ENCODE measurements at regions of chr4 and their contacts with region 1.

Region 1: GRCh38 chr4:74038161-74039064 is at the start of gene CXCL3:
- DNase-seq: peak; percentile 79 to 80
- ATAC-seq: peak; percentile 90 to 97 (median 95)
- H3K4me3 ChIP-seq: peak within 1 kb of the TSS; percentile 43 to 78 (median 68)
- H3K27ac ChIP-seq: peak within 1 kb of the TSS; percentile 27 to 94 (median 80)
- H3K4me1 ChIP-seq: peaks cover 0 to 22% (median 5%) of the 10 kb centered on the region in 9 donors
- H3K27me3 ChIP-seq: peaks cover 0 to 16% (median 0%) of the 10 kb centered on the region in 7 donors
- CTCF ChIP-seq: peak; percentile 13 to 65 (median 49)
- total RNA-seq, gene CXCL3: 0.24 to 5.1 (median 1.4) TPM in 9 of 10 donors, not detected in the other

Region 2: GRCh38 chr4:73729534-73730165 is 308.8 kb before region 1 on chr4:
- intact Hi-C with region 1: loop called in 1 of 10 experiments (anchors 10 kb)
- DNase-seq: peak; percentile 30 to 60
- ATAC-seq: peak; percentile 76 to 91 (median 87)
- H3K4me3 ChIP-seq: no peak overlapping the region
- H3K27ac ChIP-seq: peak overlapping the region in 1 of 10 donors; percentile 83
- H3K4me1 ChIP-seq: peaks cover 0 to 80% (median 32%) of the 10 kb centered on the region in 9 donors
- H3K27me3 ChIP-seq: no peaks in the 10 kb centered on the region
- CTCF ChIP-seq: peak; percentile 62 to 90 (median 83)

Region 3: DNA sequence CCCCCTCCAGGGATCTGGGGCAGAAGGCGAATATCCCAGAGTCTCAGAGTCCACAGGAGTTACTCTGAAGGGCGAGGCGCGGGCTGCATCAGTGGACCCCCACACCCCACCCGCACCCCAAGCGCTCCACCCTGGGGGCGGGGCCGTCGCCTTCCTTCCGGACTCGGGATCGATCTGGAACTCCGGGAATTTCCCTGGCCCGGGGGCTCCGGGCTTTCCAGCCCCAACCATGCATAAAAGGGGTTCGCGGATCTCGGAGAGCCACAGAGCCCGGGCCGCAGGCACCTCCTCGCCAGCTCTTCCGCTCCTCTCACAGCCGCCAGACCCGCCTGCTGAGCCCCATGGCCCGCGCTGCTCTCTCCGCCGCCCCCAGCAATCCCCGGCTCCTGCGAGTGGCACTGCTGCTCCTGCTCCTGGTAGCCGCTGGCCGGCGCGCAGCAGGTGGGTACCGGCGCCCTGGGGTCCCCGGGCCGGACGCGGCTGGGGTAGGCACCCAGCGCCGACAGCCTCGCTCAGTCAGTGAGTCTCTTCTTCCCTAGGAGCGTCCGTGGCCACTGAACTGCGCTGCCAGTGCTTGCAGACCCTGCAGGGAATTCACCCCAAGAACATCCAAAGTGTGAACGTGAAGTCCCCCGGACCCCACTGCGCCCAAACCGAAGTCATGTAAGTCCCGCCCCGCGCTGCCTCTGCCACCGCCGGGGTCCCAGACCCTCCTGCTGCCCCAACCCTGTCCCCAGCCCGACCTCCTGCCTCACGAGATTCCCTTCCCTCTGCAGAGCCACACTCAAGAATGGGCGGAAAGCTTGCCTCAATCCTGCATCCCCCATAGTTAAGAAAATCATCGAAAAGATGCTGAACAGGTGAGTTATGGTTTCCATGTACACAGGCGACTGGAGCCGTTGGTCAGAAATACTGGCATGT is 169.0 kb before region 1 on chr4 and contains the start of gene CXCL1:
- intact Hi-C with region 1: loop called in 1 of 10 experiments (anchors 5 kb)
- DNase-seq: peak; percentile 16 to 56
- ATAC-seq: peak; percentile 62 to 83 (median 73)
- H3K4me3 ChIP-seq: peak within 1 kb of the TSS; percentile 36 to 75 (median 62)
- H3K27ac ChIP-seq: peak within 1 kb of the TSS in 8 of 10 donors; percentile 28 to 91 (median 64)
- H3K4me1 ChIP-seq: peaks cover 0 to 31% (median 12%) of the 10 kb centered on the region in 9 donors
- H3K27me3 ChIP-seq: peaks cover 0 to 19% (median 5%) of the 10 kb centered on the region in 7 donors
- CTCF ChIP-seq: no peak
- total RNA-seq, gene CXCL1: 0.30 to 15.0 (median 1.3) TPM

Region 4: DNA sequence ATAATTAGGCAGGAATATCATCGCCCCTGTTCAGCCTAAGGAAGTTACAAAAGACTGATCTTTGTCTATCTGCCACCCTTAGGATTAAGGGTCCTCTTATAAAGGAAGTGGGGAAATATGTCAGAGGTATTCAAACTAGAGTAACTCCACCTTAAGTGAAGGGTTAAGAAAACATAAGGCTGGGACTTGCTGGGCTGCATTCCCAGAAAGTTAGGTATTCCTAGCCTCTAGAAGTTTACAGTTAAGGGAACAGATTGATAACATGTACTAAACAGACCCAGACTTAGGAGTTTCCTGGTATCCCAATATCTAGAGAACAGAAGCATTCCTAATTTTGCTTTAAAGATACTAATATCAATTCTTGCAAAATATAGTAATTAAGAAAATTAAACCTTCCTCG is 54.5 kb after region 1 on chr4:
- intact Hi-C with region 1: loop called in 3 of 10 experiments (anchors 5 to 10 kb)
- DNase-seq: no peak
- ATAC-seq: no peak
- H3K4me3 ChIP-seq: no peak overlapping the region
- H3K27ac ChIP-seq: peak overlapping the region in 1 of 10 donors; percentile 69
- H3K4me1 ChIP-seq: peaks cover 0 to 26% (median 4%) of the 10 kb centered on the region in 9 donors
- H3K27me3 ChIP-seq: peaks cover 0 to 3% (median 0%) of the 10 kb centered on the region in 7 donors
- CTCF ChIP-seq: no peak

Region 5: DNA sequence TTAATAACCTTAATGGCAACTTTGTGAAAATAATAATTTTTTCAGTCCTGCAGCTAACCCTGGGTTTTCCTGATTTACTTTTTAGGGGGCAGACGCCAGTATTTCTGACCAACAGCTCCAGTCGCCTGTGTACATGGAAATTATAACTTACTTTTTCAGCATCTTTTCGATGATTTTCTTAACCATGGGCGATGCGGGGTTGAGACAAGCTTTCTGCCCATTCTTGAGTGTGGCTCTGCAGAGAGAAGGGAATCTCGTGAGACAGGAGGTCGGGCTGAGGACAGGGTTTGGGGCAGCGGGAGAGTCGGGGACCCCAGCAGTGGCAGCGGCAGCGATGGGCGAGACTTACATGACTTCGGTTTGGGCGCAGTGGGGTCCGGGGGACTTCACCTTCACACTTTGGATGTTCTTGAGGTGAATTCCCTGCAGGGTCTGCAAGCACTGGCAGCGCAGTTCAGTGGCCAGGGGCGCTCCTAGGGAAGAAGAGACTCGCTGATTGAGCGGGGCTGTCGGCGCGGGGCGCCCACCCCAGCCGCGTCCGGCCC is 60.1 kb after region 1 on chr4:
- intact Hi-C with region 1: loop called in 4 of 10 experiments (anchors 5 to 10 kb)
- DNase-seq: peak in 1 of 2 donors; percentile 5
- ATAC-seq: peak in 1 of 8 donors; percentile 8
- H3K4me3 ChIP-seq: peak overlapping the region; percentile 45 to 72 (median 64)
- H3K27ac ChIP-seq: peak overlapping the region; percentile 59 to 95 (median 88)
- H3K4me1 ChIP-seq: peaks cover 0 to 35% (median 15%) of the 10 kb centered on the region in 9 donors
- H3K27me3 ChIP-seq: peaks cover 0 to 3% (median 0%) of the 10 kb centered on the region in 7 donors
- CTCF ChIP-seq: no peak

Region 6: DNA sequence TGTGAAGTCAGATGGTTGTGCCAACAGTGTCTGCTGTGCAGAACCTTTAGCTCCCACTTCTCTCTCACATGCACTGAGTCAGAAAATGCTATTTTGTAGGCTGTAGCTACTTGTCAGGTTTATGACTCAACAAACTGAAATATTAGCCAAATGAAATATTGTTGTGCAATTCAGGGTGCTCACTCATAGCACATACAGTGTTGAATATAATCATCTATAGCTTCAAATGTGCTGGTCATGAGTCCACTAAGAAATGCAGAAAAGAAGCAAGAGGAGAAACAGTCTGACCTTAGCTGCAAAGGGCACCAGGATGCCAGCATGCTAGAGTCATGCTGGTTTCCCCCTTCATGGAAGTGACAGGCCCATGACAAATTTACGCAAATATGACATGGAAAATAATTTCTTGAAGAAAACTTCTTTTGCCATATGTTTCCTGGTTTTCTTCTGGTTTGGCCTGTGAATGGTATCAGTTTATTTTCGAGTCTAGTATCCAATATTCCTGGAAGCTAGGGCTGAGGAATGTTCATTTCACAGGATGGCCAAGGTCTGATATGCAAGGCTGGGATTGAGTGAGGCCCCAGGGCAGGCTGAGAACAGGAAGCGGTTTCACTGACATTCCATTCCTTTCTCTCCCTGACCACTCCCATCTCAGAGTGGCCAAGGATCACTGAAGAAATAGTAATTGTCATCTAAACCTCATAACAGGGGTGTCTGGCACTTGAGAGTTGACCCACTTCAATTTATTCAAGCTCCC is 70.9 kb after region 1 on chr4:
- intact Hi-C with region 1: loop called in 1 of 10 experiments (anchors 10 kb)
- DNase-seq: peak in 1 of 2 donors; percentile 53
- ATAC-seq: peak; percentile 85 to 92 (median 90)
- H3K4me3 ChIP-seq: no peak overlapping the region
- H3K27ac ChIP-seq: peak overlapping the region; percentile 62 to 87 (median 78)
- H3K4me1 ChIP-seq: peaks cover 9 to 74% (median 50%) of the 10 kb centered on the region in 9 donors
- H3K27me3 ChIP-seq: no peaks in the 10 kb centered on the region
- CTCF ChIP-seq: no peak

Region 7: GRCh38 chr4:74123065-74123728 is 84.8 kb after region 1 on chr4:
- intact Hi-C with region 1: loop called in 1 of 10 experiments (anchors 10 kb)
- DNase-seq: no peak
- ATAC-seq: peak in 7 of 8 donors; percentile 61 to 90 (median 75)
- H3K4me3 ChIP-seq: no peak overlapping the region
- H3K27ac ChIP-seq: peak overlapping the region in 1 of 10 donors; percentile 31
- H3K4me1 ChIP-seq: peaks cover 0 to 17% (median 4%) of the 10 kb centered on the region in 9 donors
- H3K27me3 ChIP-seq: no peaks in the 10 kb centered on the region
- CTCF ChIP-seq: no peak

Measured in heart right ventricle (tissue), 16 donors.